ENCODE measurements at regions of chr10 and their contacts with region 1.

Region 1: DNA sequence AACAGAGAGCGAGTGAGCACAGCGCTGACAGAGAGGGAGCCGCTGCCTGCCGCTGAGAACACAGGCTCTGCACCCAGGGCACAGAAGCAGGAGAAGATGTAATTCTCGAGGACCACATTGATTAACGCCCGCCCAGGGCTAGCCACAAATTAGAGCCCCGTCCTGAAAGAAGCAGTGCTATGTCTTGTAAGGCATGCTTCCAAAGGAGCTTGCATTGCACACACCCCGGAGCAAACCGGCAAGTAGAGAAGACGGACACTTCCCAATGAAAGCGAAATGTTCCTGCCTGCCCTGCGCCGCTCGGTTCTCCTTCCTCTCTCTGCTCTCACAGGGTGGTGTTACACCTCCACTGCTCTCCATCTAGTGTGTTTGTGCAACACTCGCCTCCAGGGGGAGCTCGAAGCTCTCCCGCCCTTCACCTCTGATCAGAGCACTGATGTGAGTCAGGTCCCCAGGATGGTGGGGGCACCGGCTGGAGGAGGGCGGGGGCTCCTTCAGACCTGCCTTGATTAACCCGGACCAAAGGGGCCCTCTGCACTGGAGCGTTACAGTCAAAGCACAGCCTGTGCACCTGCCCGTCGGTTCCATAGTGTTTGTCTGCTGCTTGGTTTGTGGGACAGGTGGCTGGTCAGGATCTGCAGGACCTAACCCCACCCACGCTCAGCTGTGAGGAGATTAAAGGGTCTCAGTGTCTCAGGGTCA is 316.5 kb downstream of the ADARB2 start:
- DNase-seq: peak; percentile 58 to 60
- ATAC-seq: peak; percentile 94 to 99
- H3K4me3 ChIP-seq: no peak overlapping the region
- H3K27ac ChIP-seq: no peak overlapping the region
- H3K4me1 ChIP-seq: no peaks in the 10 kb centered on the region
- CTCF ChIP-seq: peak; percentile 63
- EP300 ChIP-seq: no peak
- POLR2A ChIP-seq: no peak
- RAD21 ChIP-seq: peak; percentile 60 to 65

Region 2: DNA sequence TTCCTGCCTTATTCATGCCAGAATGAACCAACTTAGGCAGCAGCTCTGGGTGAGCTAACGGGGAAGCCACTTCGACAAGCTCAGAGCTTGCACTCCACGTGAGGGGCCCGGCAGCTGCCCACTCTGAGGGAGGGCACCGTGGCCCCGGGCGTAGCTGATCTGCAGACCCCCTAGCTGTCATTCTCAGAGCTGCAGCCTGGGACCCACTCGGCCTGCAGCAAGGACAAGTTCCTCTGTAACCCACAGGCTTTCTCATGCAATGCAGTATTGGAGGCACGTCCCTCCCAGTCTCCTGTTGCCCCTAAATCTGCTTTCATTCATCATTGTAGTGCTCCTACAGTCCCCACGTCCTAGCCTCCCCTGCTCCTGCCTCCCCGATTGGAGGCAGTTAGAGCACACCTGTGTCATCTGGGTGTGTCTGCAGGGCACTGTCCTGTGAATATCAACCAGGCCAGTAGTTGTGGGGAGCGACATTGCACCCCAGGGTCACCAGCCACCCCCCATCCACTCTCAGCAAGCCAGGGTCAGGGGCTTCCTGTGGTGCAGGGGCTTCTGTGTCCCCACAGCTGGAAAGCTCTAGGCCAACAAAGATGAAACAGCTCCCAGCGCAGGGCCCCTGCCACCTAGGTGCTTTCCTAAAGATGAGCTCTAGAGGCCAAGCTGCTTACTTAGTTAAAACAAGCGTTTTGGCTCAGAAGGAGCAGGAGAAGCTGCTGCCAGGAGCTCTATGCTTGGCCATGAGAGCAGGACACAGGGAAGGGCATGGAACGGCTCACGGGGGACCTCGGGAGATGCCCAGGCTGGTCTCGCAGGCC is 17.1 kb before region 1 on chr10:
- CTCF ChIA-PET with region 1: interaction called, 21 read pairs
- POLR2A ChIA-PET with region 1: no interaction called
- DNase-seq: no peak
- ATAC-seq: peak in 1 of 2 experiments; percentile 56; a peak in 4 of 6 replicates
- H3K4me3 ChIP-seq: no peak overlapping the region
- H3K27ac ChIP-seq: no peak overlapping the region
- H3K4me1 ChIP-seq: no peaks in the 10 kb centered on the region
- CTCF ChIP-seq: no peak
- EP300 ChIP-seq: no peak
- POLR2A ChIP-seq: no peak
- RAD21 ChIP-seq: no peak

Region 3: DNA sequence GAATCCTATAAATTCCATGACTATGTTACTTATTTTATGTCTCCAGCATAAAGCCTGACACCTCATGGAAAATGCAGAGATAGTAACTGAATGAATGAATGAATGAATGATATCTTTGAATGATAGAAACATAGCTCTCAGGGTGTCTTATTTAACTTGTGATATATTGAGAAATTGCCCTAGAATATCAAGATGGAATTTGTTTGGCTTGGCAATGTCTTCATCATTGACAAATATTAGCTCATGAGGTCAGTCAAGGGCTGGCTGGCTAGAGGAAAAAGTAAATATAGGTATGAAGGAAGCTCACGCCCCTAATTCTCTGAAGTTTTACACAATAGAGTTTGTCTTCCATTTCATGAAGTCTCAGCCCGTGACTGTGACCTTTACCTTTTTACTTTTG is 11.3 kb after region 1 on chr10:
- CTCF ChIA-PET with region 1: interaction called, 13 read pairs
- POLR2A ChIA-PET with region 1: no interaction called
- DNase-seq: no peak
- ATAC-seq: no peak
- H3K4me3 ChIP-seq: no peak overlapping the region
- H3K27ac ChIP-seq: no peak overlapping the region
- H3K4me1 ChIP-seq: no peaks in the 10 kb centered on the region
- CTCF ChIP-seq: no peak
- EP300 ChIP-seq: no peak
- POLR2A ChIP-seq: no peak
- RAD21 ChIP-seq: no peak